ENCODE measurements at regions of chr10 and their contacts with region 1.

Region 1: DNA sequence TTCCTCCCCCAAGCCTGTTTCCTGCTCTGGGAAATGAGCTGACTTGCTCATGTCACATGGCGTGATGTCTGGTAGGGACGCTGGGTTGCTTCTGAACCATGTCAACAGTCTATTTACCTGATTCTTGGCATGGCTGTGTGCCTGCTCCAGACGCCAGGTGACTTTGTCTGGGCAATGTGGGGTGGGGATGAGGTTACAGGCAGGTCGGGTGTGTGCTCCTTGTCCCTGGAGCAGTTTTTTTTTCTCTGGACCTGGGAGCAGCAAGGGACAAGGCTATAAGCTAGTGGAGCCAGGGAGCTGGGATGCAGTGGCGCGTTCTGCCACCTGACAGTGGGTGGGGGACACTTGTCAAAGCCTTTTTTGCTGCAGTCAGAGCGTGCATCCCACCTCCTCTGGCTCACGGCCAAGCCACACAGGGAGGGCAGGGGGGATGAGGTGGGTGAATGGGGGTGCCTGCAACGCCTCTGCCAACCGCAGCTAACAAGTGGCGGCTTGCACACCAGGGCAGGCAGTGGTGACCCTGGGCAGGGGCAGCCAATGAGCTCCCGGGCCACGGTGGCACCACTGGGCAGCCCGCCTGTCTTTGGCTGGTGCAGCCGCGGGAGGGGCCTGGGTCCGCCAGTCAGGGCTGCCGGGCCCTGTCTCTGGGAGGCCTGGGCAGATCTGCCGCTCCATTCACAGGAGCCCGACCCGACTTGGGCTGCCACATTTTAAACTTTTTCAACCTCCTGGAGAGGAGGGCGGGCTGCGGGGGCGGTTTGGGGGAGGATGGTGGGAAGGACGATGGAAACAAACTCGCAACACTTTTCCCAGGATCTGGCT is 22.9 kb downstream of the DNAJB12 start:
- DNase-seq: peak; percentile 90
- ATAC-seq: peak; percentile 52

Region 2: GRCh38 chr10:71893920-71894319 is 437.9 kb before region 1 on chr10:
- intact Hi-C with region 1: loop called (anchors 10 kb)
- DNase-seq: no peak
- ATAC-seq: no peak

Region 3: DNA sequence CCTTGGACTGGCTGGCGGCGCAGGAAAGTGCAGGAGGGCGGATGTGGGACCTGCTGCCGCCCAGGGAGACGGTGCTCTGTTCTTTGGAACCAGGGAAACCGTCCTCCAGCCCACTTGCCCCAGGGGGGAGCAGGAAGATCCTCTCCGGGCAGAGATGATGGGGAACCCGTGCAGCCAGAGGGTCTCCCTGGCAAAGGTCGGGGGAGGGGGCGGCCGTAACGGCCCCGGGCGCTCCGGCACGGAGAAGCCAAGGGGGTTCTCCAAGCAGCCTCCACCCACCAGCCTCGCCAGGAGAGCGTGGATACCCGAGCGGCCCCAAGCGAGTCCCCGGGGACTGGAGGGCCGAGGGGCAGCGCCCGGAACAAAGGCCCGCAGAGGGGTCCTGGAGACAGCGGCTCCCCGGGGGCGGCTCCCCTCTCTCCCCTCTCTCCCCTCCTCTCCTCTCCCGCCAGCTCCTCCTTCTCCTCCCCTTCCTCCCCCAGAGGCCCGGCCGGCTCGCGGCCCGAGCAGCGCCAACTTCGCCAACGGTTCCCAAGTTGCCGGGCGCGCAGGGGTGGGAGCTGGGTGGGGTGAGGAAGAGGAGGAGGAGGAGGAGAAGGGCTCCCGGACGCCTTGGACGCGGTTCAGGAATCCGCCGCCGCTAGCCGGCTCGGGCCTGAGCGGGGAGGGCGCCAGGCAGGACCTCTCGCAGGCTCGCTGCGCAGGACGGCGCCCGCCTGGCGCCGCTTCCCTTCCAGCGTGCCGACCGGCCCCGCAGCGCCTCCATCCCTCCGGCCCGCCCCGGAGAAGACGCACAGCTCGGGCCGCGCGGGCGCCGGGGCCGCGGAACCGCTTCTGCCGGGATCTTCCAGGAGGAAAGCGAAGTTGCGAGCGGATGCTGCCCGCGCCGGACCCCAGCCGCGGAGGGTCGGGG is 367.8 kb before region 1 on chr10 and contains the start of gene CHST3:
- intact Hi-C with region 1: loop called (anchors 10 kb)
- DNase-seq: peak; percentile 90
- ATAC-seq: peak; percentile 84
- total RNA-seq, gene CHST3: 15.4 TPM

Region 4: DNA sequence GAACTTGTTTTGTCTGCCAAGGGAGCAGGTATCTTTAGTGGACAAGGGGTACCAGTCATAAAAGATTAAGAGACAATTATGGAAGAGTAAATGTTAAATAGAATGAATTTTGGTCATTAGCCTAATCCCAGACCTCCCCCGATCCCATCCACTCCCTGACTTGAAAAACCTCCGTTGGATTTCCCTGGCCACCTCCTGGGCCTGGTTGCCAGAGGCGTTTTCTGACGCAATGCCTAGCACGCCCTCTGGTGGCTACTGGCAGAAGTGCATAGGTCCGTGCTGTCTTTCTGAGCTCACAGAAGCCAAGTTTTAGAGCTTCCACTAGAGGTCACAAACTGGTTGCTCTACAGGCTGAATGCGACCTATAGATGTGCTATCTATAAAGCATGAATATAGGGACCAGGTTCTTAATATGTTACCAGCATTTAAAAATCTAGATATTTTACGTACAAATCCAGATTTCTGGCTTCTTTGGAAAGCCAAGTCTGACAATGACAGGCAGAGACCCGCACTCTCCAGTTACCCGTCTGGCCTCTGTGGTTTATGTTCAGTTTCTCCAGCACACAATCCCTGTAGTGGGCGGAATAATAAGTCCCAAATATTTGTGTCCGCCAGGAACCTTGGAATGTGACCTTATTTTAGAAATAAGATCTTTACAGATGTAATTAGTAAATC is 283.2 kb before region 1 on chr10:
- intact Hi-C with region 1: loop called (anchors 10 kb)
- DNase-seq: peak; percentile 93
- ATAC-seq: peak; percentile 87

Region 5: GRCh38 chr10:72133517-72133916 is 198.3 kb before region 1 on chr10:
- intact Hi-C with region 1: loop called (anchors 5 kb)
- DNase-seq: no peak
- ATAC-seq: no peak

Region 6: DNA sequence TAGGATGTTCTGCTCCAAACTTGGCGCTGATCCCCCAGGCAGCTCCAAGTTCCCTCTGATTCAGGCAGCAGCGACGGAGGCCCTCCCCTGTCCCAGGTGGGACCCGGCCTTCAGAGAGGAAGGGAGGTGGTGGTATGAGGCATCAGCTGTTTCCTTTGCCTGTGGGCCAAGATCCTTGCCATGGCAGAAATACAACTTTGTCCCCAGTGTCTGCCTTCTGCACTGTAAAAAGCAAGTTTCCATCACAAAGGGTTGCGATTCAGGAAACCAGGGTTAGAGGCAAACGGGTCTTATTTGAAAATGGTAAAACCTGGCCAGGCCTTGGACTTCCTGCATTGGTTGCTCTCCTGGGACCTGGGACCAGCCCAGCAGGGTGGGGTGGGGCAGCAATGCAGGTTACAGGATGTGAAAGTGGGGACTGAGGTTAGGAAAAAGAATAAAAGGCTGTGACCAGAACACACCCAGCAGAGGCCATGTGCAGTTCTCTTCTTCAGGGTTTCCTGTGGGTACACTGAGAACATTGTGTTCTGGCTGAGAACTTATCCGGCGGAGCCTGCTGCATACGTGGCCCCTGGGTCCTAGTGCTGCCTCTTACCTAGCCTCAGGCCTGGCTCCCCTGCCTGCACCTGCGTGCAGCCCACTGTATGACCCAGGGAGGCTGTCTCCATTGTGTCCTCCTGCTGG is 83.2 kb before region 1 on chr10:
- intact Hi-C with region 1: loop called (anchors 10 kb)
- DNase-seq: peak; percentile 89
- ATAC-seq: peak; percentile 89

Measured in Right ventricle myocardium superior (tissue), 1 donor.